K562 (cell line): ENCODE measurements at regions of chr6 and their contacts with region 1.

Region 1: DNA sequence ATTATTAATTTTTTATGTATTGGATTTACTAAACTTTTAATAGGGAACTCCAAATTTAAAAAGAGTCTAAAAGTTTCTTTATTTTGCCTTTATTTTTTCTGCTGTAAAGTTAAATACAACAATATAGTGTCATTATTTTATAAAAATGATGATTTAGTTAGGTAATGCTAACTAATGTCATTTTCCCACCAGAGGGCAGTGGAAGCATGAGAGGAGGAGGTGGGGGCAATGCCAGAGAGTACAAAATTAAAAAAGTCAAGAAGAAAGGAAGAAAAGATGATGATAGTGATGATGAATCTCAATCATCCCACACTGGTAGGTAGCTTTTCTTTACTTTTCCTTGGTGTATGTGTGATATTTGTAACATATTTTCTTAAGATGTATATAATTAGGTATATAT is 20.2 kb upstream of the FHL5 start:
- DNase-seq: peak in 2 of 4 experiments; percentile 6 to 30
- ATAC-seq: peak; percentile 72
- H3K4me3 ChIP-seq: no peak overlapping the region
- H3K27ac ChIP-seq: no peak overlapping the region
- H3K4me1 ChIP-seq: no peaks in the 10 kb centered on the region
- H3K27me3 ChIP-seq: no peaks in the 10 kb centered on the region
- CTCF ChIP-seq: peak in 2 of 3 experiments; percentile 27 to 51; a peak in 2 of 6 replicates
- EP300 ChIP-seq: no peak
- POLR2A ChIP-seq: no peak
- RAD21 ChIP-seq: peak in 1 of 2 experiments; percentile 32; a peak in 2 of 4 replicates

Region 2: DNA sequence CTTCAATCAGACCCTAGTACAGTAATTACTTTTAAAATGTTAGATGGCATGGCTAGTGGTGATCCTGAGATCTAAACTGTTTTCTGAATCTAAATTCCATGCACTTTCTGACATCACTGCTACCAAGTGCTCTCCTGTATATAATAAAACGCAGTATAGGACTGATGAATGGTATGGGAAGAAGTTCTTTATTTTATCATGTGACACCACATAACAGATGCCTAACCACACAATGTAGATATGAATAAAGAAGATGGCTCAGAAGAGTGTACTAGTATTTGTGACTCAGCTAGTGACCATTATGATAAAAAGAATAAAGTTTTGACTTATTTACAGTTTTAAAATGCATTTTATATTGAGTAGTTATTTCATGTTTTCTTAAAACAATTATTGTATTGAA is 346.4 kb after region 1 on chr6:
- CTCF ChIA-PET with region 1: no interaction called
- POLR2A ChIA-PET with region 1: no interaction called
- in situ Hi-C with region 1: no loop called
- intact Hi-C with region 1: loop called (anchors 10 kb)
- DNase-seq: no peak
- ATAC-seq: peak; percentile 58
- H3K4me3 ChIP-seq: no peak overlapping the region
- H3K27ac ChIP-seq: no peak overlapping the region
- H3K4me1 ChIP-seq: no peaks in the 10 kb centered on the region; a peak in 1 of 5 replicates
- H3K27me3 ChIP-seq: no peaks in the 10 kb centered on the region
- CTCF ChIP-seq: no peak
- EP300 ChIP-seq: no peak
- POLR2A ChIP-seq: no peak
- RAD21 ChIP-seq: no peak

Region 3: GRCh38 chr6:97423190-97423589 is 880.5 kb after region 1 on chr6:
- CTCF ChIA-PET with region 1: no interaction called
- POLR2A ChIA-PET with region 1: no interaction called
- in situ Hi-C with region 1: no loop called
- intact Hi-C with region 1: no loop called
- DNase-seq: no peak
- ATAC-seq: no peak
- H3K4me3 ChIP-seq: no peak overlapping the region
- H3K27ac ChIP-seq: no peak overlapping the region
- H3K4me1 ChIP-seq: no peaks in the 10 kb centered on the region
- H3K27me3 ChIP-seq: no peaks in the 10 kb centered on the region
- CTCF ChIP-seq: no peak
- EP300 ChIP-seq: no peak
- POLR2A ChIP-seq: no peak
- RAD21 ChIP-seq: no peak